ENCODE measurements at regions of chr20 and their contacts with region 1.

Region 1: GRCh38 chr20:62237801-62238571 is at the start of gene OSBPL2:
- DNase-seq: peak; percentile 100
- H3K4me3 Mint-ChIP-seq: peak within 1 kb of the TSS; percentile 85
- H3K27ac Mint-ChIP-seq: peak within 1 kb of the TSS; percentile 58
- H3K4me1 Mint-ChIP-seq: peaks cover 16% of the 10 kb centered on the region
- H3K27me3 Mint-ChIP-seq: no peaks in the 10 kb centered on the region
- total RNA-seq, gene OSBPL2: 27.0 and 31.6 TPM in 2 replicates

Region 2: GRCh38 chr20:62065669-62066338 is 172.2 kb before region 1 on chr20 and contains the start of gene TAF4:
- intact Hi-C with region 1: loop called (anchors 2 kb)
- DNase-seq: peak; percentile 80
- H3K4me3 Mint-ChIP-seq: peak within 1 kb of the TSS; percentile 84
- H3K27ac Mint-ChIP-seq: peak within 1 kb of the TSS; percentile 84
- H3K4me1 Mint-ChIP-seq: peaks cover 42% of the 10 kb centered on the region
- H3K27me3 Mint-ChIP-seq: peaks cover 6% of the 10 kb centered on the region
- total RNA-seq, gene TAF4: 26.3 and 28.3 TPM in 2 replicates

Region 3: GRCh38 chr20:62143118-62143973 is 94.6 kb before region 1 on chr20 and contains the starts of genes PSMA7 and SS18L1:
- intact Hi-C with region 1: loop called (anchors 5 kb)
- DNase-seq: peak; percentile 84
- H3K4me3 Mint-ChIP-seq: peak within 1 kb of the TSS; percentile 90
- H3K27ac Mint-ChIP-seq: peak within 1 kb of the TSS; percentile 91
- H3K4me1 Mint-ChIP-seq: peaks cover 39% of the 10 kb centered on the region
- H3K27me3 Mint-ChIP-seq: no peaks in the 10 kb centered on the region
- total RNA-seq, gene PSMA7: 444 and 450 TPM in 2 replicates
- total RNA-seq, gene SS18L1: 24.3 and 29.4 TPM in 2 replicates

Region 4: GRCh38 chr20:62219992-62220665 is 17.9 kb before region 1 on chr20 and contains the start of gene HRH3:
- intact Hi-C with region 1: loop called (anchors 1 kb)
- DNase-seq: peak; percentile 47
- H3K4me3 Mint-ChIP-seq: peak within 1 kb of the TSS; percentile 15
- H3K27ac Mint-ChIP-seq: no peak within 1 kb of the TSS
- H3K4me1 Mint-ChIP-seq: no peaks in the 10 kb centered on the region
- H3K27me3 Mint-ChIP-seq: peaks cover 20% of the 10 kb centered on the region
- total RNA-seq, gene HRH3: not detected in 2 replicates

Region 5: DNA sequence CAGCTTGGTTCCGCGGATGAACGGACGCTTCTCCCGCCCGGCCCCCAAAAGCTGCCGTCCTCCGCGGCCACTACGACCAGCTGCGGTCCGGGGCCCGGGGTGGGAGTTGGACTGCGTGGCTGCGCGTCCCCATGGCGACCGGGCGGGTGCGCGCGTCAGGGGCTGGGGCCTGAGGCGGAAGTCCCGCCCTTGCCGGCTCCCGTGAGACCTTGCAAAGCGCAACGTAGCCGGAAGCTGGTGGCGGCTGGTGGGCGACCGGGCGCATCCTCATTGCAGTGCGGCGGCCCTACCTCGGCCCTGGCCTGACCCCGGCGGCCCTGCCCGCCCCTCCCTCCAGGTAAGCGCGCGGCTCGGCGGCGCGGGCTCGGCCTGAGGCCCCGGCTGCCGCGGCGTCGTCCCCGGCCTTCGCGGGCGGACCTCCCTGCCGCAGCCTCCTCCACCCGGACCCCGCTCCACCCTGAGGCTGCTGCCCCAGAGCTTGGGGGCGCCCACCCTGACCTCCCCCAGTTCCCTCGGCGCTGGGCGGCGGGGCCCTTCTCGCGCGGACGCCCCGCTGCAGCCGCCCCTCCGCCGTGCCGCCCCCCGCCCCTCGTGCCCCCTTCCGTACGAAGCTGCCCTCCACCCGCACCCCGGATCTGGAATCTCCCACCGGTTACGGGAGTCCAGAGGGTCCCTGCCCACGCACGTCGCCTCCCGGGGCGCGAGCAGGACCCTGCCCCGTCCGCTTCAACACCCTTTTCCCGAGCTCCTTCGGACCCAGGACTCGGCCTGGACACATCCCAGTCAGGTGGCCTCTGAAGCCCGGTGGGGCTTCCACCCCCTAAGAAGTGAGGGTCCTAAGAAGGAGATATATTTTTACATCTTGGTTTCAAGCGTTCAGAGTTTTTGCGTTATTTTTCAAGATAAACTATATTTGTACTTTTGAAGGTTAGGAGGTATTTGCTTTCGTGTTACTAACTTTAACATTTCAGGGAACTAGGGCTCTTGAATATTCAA is 1034.9 kb after region 1 on chr20 and contains the start of gene ARFGAP1:
- intact Hi-C with region 1: loop called (anchors 5 kb)
- DNase-seq: peak; percentile 86
- H3K4me3 Mint-ChIP-seq: peak within 1 kb of the TSS; percentile 98
- H3K27ac Mint-ChIP-seq: peak within 1 kb of the TSS; percentile 89
- H3K4me1 Mint-ChIP-seq: peaks cover 23% of the 10 kb centered on the region
- H3K27me3 Mint-ChIP-seq: peaks cover 3% of the 10 kb centered on the region
- total RNA-seq, gene ARFGAP1: 102 and 107 TPM in 2 replicates

Measured in activated T-helper 1 cell treated with anti-CD3 and anti-CD28 coated beads, Interleukin-12 subunit alpha, Interleukin-12 subunit beta, Interleukin-2, Interleukin-4 antibody, amounts not matched to agents 30 ng/mL and 10 ng/mL and 1 ng/mL, durations not matched to agents 14 hours and 24 hours and 36 hours (primary cell).